K562 (cell line): ENCODE measurements at regions of chr12 and their contacts with region 1.

Region 1: DNA sequence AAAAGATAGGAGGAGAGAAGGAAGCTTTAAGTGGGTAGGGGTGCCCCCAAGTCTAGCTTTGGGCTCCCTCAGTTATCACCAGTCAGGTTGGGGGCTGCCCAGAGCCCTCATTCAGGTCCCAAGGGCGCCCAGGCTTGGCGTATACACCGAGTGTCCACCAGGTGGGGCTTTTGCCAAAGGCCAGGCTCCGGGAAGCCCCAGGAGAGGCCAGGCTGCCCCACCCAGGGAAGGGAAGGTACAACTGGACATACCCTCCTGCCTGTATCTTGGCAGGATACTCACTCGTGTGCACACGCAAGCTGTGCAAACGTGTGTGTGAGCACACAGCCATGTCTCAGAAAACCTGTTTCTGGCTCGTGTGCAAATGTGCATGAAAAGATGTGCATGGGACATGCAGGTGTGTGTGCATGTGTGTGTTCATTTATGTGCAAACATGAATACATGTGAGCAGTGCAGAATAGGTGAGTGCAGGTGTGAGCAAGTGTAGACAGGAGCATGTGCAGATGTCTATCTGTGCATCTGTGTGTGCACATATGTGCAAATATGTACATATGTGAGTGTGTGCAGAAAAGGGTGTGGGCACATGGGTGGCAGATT is 103.9 kb upstream of the MYL2 start:
- DNase-seq: peak; percentile 67 to 80 (median 78)
- ATAC-seq: peak; percentile 100
- H3K4me3 ChIP-seq: no peak overlapping the region
- H3K27ac ChIP-seq: no peak overlapping the region
- H3K4me1 ChIP-seq: no peaks in the 10 kb centered on the region
- H3K27me3 ChIP-seq: peaks cover 0 to 18% of the 10 kb centered on the region in 2 experiments; a peak in 2 of 5 replicates
- CTCF ChIP-seq: peak; percentile 87 to 96 (median 87)
- EP300 ChIP-seq: no peak
- POLR2A ChIP-seq: no peak
- RAD21 ChIP-seq: peak; percentile 76 to 92

Region 2: GRCh38 chr12:110846615-110847566 is 177.4 kb before region 1 on chr12 and contains the start of gene CCDC63:
- CTCF ChIA-PET with region 1: no interaction called
- POLR2A ChIA-PET with region 1: no interaction called
- in situ Hi-C with region 1: no loop called
- intact Hi-C with region 1: no loop called
- DNase-seq: peak; percentile 50 to 61 (median 56)
- ATAC-seq: peak; percentile 96
- H3K4me3 ChIP-seq: peak within 1 kb of the TSS; percentile 36
- H3K27ac ChIP-seq: no peak within 1 kb of the TSS
- H3K4me1 ChIP-seq: peaks cover 0 to 6% of the 10 kb centered on the region in 2 experiments; a peak in 2 of 5 replicates
- H3K27me3 ChIP-seq: peaks cover 24 to 55% of the 10 kb centered on the region in 2 experiments; a peak in 4 of 5 replicates
- CTCF ChIP-seq: peak; percentile 57 to 61 (median 58)
- EP300 ChIP-seq: no peak
- POLR2A ChIP-seq: no peak
- RAD21 ChIP-seq: peak; percentile 34 to 46
- polyA plus RNA-seq, gene CCDC63: not detected

Region 3: GRCh38 chr12:110937104-110937641 is 87.1 kb before region 1 on chr12:
- CTCF ChIA-PET with region 1: no interaction called
- POLR2A ChIA-PET with region 1: no interaction called
- in situ Hi-C with region 1: no loop called
- intact Hi-C with region 1: loop called (anchors 5 kb)
- DNase-seq: peak; percentile 68 to 79 (median 73)
- ATAC-seq: peak; percentile 88
- H3K4me3 ChIP-seq: no peak overlapping the region
- H3K27ac ChIP-seq: no peak overlapping the region
- H3K4me1 ChIP-seq: peaks cover 0 to 5% of the 10 kb centered on the region in 2 experiments; a peak in 1 of 5 replicates
- H3K27me3 ChIP-seq: peaks cover 0 to 17% of the 10 kb centered on the region in 2 experiments; a peak in 2 of 5 replicates
- CTCF ChIP-seq: peak; percentile 87 to 95 (median 88)
- EP300 ChIP-seq: no peak
- POLR2A ChIP-seq: no peak
- RAD21 ChIP-seq: peak; percentile 64 to 81

Region 4: GRCh38 chr12:111181143-111181726 is 156.9 kb after region 1 on chr12:
- CTCF ChIA-PET with region 1: no interaction called
- POLR2A ChIA-PET with region 1: no interaction called
- in situ Hi-C with region 1: no loop called
- intact Hi-C with region 1: loop called (anchors 10 kb)
- DNase-seq: peak in 1 of 4 experiments; percentile 8
- ATAC-seq: no peak
- H3K4me3 ChIP-seq: no peak overlapping the region
- H3K27ac ChIP-seq: no peak overlapping the region
- H3K4me1 ChIP-seq: peaks cover 5 to 9% of the 10 kb centered on the region in 2 experiments; a peak in 4 of 5 replicates
- H3K27me3 ChIP-seq: peaks cover 8 to 46% of the 10 kb centered on the region in 2 experiments; a peak in 3 of 5 replicates
- CTCF ChIP-seq: no peak
- EP300 ChIP-seq: no peak
- POLR2A ChIP-seq: no peak
- RAD21 ChIP-seq: no peak

Region 5: GRCh38 chr12:111298582-111299436 is 274.5 kb after region 1 on chr12:
- CTCF ChIA-PET with region 1: interaction called, 5 read pairs
- POLR2A ChIA-PET with region 1: interaction called, 3 read pairs
- in situ Hi-C with region 1: loop called (anchors 5 kb)
- intact Hi-C with region 1: loop called (anchors 5 kb)
- DNase-seq: peak; percentile 63 to 77 (median 69)
- ATAC-seq: peak; percentile 97
- H3K4me3 ChIP-seq: no peak overlapping the region
- H3K27ac ChIP-seq: no peak overlapping the region
- H3K4me1 ChIP-seq: no peaks in the 10 kb centered on the region
- H3K27me3 ChIP-seq: peaks cover 6 to 15% of the 10 kb centered on the region in 2 experiments; a peak in 3 of 5 replicates
- CTCF ChIP-seq: peak; percentile 83 to 99 (median 95)
- EP300 ChIP-seq: no peak
- POLR2A ChIP-seq: no peak
- RAD21 ChIP-seq: peak in 1 of 2 experiments; percentile 66; a peak in 3 of 4 replicates

Region 6: GRCh38 chr12:111304642-111305071 is 280.4 kb after region 1 on chr12:
- CTCF ChIA-PET with region 1: no interaction called
- POLR2A ChIA-PET with region 1: interaction called, 3 read pairs
- in situ Hi-C with region 1: loop called (anchors 5 kb)
- intact Hi-C with region 1: loop called (anchors 5 kb)
- DNase-seq: peak; percentile 66 to 79 (median 74)
- ATAC-seq: peak; percentile 56; the same call in 2 of the 3 replicates
- H3K4me3 ChIP-seq: no peak overlapping the region
- H3K27ac ChIP-seq: no peak overlapping the region
- H3K4me1 ChIP-seq: no peaks in the 10 kb centered on the region
- H3K27me3 ChIP-seq: peaks cover 0 to 17% of the 10 kb centered on the region in 2 experiments; a peak in 2 of 5 replicates
- CTCF ChIP-seq: peak; percentile 80 to 97 (median 95)
- EP300 ChIP-seq: no peak
- POLR2A ChIP-seq: no peak
- RAD21 ChIP-seq: peak; percentile 13 to 53; a peak in 2 of 4 replicates

Region 7: GRCh38 chr12:111313833-111314259 is 289.5 kb after region 1 on chr12:
- CTCF ChIA-PET with region 1: interaction called, 8 read pairs
- POLR2A ChIA-PET with region 1: interaction called, 3 read pairs
- in situ Hi-C with region 1: no loop called
- intact Hi-C with region 1: loop called (anchors 1 kb)
- DNase-seq: peak; percentile 75 to 90 (median 86)
- ATAC-seq: peak; percentile 93
- H3K4me3 ChIP-seq: no peak overlapping the region
- H3K27ac ChIP-seq: no peak overlapping the region
- H3K4me1 ChIP-seq: peaks cover 0 to 5% of the 10 kb centered on the region in 2 experiments; a peak in 2 of 5 replicates
- H3K27me3 ChIP-seq: peaks cover 14 to 35% of the 10 kb centered on the region in 2 experiments; a peak in 4 of 5 replicates
- CTCF ChIP-seq: peak; percentile 90 to 92 (median 91)
- EP300 ChIP-seq: no peak
- POLR2A ChIP-seq: no peak
- RAD21 ChIP-seq: peak; percentile 64 to 89